Ascending aorta (tissue), 2 donors: ENCODE measurements at regions of chr14 and their contacts with region 1.

Region 1: GRCh38 chr14:72516936-72517700 is 376.8 kb downstream of the DPF3 start:
- DNase-seq: peak in 1 of 2 donors; percentile 81
- H3K4me3 ChIP-seq: peak overlapping the region in 1 of 2 donors; percentile 9
- H3K27ac ChIP-seq: no peak overlapping the region
- H3K4me1 ChIP-seq: peaks cover 2 to 3% of the 10 kb centered on the region in 2 donors
- H3K27me3 ChIP-seq: no peaks in the 10 kb centered on the region
- CTCF ChIP-seq: peak; percentile 83 to 92 (median 84)

Region 2: DNA sequence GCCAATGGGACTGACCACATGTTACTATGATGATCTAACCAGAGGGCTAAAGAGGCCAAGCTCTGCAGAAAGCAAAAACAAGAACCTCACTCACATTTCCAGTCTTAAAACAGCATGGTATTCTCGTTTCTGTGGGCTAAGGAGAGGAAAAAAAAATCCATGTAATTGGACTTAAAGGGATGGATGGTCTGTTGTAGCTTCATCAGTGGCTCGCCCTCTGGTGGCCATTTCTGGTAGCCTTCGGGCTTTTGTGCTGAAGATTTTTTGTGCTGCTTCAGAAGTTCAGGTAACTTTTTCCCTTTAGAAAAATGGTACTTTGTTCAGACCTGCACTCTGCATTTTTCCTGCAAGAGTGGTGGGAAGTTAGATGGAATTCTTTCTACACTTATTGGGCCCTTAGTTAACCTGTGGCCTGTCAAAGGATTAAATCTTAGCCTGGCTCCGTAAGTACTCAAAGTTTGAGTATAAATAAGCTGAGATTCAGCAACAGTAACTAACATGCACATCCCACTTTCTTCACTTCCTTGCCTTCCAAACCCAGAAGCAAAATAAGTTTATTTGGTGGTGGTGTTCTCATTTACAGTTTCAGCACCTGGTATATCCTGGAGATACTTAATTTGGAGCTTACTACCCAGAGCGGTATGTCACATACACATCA is 431.5 kb after region 1 on chr14:
- intact Hi-C with region 1: loop called (anchors 1 kb)
- DNase-seq: peak in 1 of 2 donors; percentile 79
- H3K4me3 ChIP-seq: no peak overlapping the region
- H3K27ac ChIP-seq: no peak overlapping the region
- H3K4me1 ChIP-seq: no peaks in the 10 kb centered on the region
- H3K27me3 ChIP-seq: no peaks in the 10 kb centered on the region
- CTCF ChIP-seq: peak; percentile 47 to 93 (median 87)